ENCODE measurements at regions of chr5 and their contacts with region 1.

Region 1: GRCh38 chr5:56950626-56951125 is 1.2 kb downstream of the MIER3 start:
- DNase-seq: peak; percentile 60
- H3K4me3 Mint-ChIP-seq: peak overlapping the region; percentile 91
- H3K27ac Mint-ChIP-seq: peak overlapping the region; percentile 77
- H3K4me1 Mint-ChIP-seq: peaks cover 22% of the 10 kb centered on the region
- H3K27me3 Mint-ChIP-seq: peaks cover 26% of the 10 kb centered on the region

Region 2: DNA sequence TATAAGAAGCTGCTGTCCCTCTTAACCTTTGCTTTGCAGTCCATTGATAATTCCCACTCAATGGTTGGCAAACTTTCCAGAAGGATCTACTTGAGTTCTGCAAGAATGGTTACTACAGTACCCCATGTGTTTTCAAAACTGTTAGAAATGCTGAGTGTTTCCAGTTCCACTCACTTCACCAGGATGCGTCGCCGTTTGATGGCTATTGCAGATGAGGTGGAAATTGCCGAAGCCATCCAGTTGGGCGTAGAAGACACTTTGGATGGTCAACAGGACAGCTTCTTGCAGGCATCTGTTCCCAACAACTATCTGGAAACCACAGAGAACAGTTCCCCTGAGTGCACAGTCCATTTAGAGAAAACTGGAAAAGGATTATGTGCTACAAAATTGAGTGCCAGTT is 69.1 kb before region 1 on chr5:
- CTCF ChIA-PET with region 1: no interaction called
- POLR2A ChIA-PET with region 1: no interaction called
- DNase-seq: no peak
- H3K4me3 Mint-ChIP-seq: no peak overlapping the region
- H3K27ac Mint-ChIP-seq: no peak overlapping the region
- H3K4me1 Mint-ChIP-seq: peaks cover 11% of the 10 kb centered on the region
- H3K27me3 Mint-ChIP-seq: no peaks in the 10 kb centered on the region

Region 3: DNA sequence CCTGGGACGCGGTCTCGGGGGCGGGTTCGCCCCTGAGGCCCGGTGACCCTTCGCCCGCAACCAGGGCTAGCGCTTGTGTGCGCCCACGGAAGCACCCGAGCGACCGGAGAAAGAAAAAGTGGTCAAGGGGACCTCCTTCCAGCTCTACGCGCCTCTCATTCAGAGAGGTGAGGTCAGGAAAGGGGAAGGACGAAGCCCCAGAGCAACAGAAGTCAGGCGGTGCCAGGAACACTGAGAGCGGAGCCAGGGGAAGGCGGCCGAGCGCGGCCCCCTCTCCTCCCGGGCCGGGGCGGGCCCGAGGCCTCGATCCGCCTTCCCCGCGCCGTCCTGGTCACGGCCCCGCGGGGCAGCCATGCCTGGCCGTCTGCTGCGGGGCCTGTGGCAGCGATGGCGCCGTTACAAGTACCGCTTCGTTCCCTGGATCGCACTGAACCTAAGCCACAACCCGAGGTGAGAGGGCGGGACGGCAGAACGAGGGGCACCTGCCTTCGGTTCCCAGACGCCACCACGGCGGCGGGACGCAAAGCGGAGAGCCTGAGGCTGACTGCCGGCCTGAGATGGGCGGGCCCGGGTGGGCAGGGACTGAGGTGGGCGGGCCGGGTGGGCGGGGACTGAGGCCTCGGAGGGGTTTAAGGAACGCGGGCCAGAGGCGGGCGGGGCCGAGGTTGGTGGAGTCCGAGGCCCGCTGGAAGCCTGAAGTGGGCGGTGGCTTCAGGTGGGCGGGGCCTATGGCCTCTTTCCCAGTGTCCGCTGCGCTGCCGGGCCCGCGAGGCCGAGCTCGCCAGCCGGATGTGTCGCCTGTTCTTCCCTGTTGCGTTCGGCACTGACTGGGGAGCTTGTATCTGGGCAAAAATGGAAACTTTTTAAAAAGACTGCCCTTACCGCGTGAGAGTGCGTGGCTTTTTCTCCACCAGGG is 41.1 kb before region 1 on chr5 and contains the start of gene SETD9:
- CTCF ChIA-PET with region 1: interaction called, 10 read pairs
- POLR2A ChIA-PET with region 1: interaction called, 30 read pairs
- DNase-seq: peak; percentile 95
- H3K4me3 Mint-ChIP-seq: peak within 1 kb of the TSS; percentile 80
- H3K27ac Mint-ChIP-seq: peak within 1 kb of the TSS; percentile 75
- H3K4me1 Mint-ChIP-seq: peaks cover 22% of the 10 kb centered on the region
- H3K27me3 Mint-ChIP-seq: peaks cover 14% of the 10 kb centered on the region
- total RNA-seq, gene SETD9: 4.1 to 4.9 TPM

Measured in activated CD4-positive, alpha-beta memory T cell treated with anti-CD3 and anti-CD28 coated beads, Interleukin-2, amount 10 ng/mL, durations not matched to agents 7 days and 5 days (primary cell).